Kidney (tissue), 22 donors: ENCODE measurements at regions of chr3 and their contacts with region 1.

Region 1: GRCh38 chr3:154095832-154096421 is 25.3 kb upstream of the ARHGEF26 start:
- DNase-seq: peak in 1 of 5 donors; percentile 38
- H3K4me3 ChIP-seq: no peak overlapping the region
- H3K27ac ChIP-seq: no peak overlapping the region
- H3K4me1 ChIP-seq: no peaks in the 10 kb centered on the region
- H3K27me3 ChIP-seq: no peaks in the 10 kb centered on the region
- CTCF ChIP-seq: peak; percentile 29

Region 2: GRCh38 chr3:154011036-154011435 is 84.9 kb before region 1 on chr3:
- intact Hi-C with region 1: no loop called
- DNase-seq: no peak
- H3K4me3 ChIP-seq: no peak overlapping the region
- H3K27ac ChIP-seq: no peak overlapping the region
- H3K4me1 ChIP-seq: no peaks in the 10 kb centered on the region
- H3K27me3 ChIP-seq: no peaks in the 10 kb centered on the region
- CTCF ChIP-seq: no peak

Region 3: GRCh38 chr3:154252759-154253638 is 157.1 kb after region 1 on chr3:
- intact Hi-C with region 1: loop called (anchors 5 kb)
- DNase-seq: peak; percentile 90 to 95 (median 93)
- H3K4me3 ChIP-seq: peak overlapping the region in 1 of 3 donors; percentile 8
- H3K27ac ChIP-seq: no peak overlapping the region
- H3K4me1 ChIP-seq: no peaks in the 10 kb centered on the region
- H3K27me3 ChIP-seq: no peaks in the 10 kb centered on the region
- CTCF ChIP-seq: peak; percentile 85

Region 4: DNA sequence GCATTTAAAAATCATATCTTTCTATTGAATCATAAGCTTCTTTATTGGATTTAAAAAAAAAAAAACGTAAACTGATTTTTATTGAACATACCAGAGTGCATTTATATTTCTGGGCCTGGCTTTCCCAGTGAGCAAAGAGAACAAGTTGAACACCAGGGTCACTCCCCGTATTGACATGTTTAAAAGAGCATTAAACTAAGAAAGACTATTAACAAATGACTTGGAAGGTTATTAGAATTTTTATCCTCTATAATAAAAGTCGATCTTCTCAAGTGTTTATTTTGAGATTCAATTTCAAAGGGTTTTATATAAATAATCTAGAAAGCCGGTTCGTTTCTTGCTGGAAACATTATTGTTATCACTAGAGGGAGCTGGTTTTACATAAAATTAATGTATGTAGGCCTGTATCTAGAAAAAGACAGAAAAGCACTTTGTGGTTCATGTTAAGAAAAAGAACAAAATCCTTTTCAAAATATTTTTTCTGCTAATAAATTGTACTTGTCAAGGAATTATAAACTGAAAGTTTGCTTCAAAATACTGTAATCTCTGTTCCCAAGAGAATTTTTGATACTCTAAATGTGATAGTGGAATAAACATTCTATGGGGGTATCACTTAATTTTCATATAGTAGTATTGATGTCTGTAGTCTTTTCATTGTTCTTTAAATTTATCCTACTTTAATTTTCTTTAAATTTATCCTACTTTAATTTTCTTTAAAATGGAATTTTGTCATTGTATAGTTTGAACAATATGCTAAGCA is 662.4 kb after region 1 on chr3:
- intact Hi-C with region 1: no loop called
- DNase-seq: peak in 2 of 5 donors; percentile 41 to 46
- H3K4me3 ChIP-seq: no peak overlapping the region
- H3K27ac ChIP-seq: no peak overlapping the region
- H3K4me1 ChIP-seq: no peaks in the 10 kb centered on the region
- H3K27me3 ChIP-seq: no peaks in the 10 kb centered on the region
- CTCF ChIP-seq: peak; percentile 2